Cardiac septum (tissue), 1 donor: ENCODE measurements at regions of chr4 and their contacts with region 1.

Region 1: GRCh38 chr4:8176547-8177399 is 18.2 kb upstream of the ABLIM2 start:
- DNase-seq: no peak

Region 2: GRCh38 chr4:8192748-8193738 is 16.3 kb after region 1 on chr4:
- intact Hi-C with region 1: loop called (anchors 2 kb)
- DNase-seq: no peak